ENCODE measurements at regions of chr2 and their contacts with region 1.

Region 1: DNA sequence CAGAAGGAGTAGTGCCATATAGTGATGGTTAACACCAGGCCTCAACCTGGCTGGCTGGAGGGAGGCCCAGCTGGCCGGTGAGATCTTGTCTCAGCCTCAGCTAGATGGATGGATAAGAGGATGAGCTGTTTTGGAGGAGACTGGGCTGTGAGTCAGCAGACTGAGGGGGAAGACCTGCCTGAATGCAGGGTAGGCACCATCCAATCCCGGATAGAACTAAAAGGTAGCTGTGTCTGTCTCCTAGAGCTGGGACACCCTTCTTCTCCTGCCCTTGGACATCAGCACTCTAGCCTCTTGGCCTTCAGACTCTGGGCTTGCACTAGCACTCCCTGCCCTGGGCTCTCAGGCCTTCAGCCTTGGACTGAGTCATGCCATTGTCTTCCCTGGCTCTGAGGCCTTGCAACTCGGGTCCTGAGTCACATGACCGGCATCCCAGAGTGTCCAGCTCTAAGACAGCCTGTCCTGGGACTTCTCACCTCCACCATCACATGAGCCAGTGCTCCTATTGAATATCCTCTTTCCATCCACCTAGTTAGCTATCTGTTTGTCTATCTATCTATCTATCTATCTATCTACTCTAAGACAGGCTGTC is 131.3 kb downstream of the TPO start:
- DNase-seq: no peak
- ATAC-seq: no peak
- H3K4me3 ChIP-seq: no peak overlapping the region
- H3K4me3 Mint-ChIP-seq: no peak overlapping the region
- H3K27ac ChIP-seq: no peak overlapping the region
- H3K27ac Mint-ChIP-seq: no peak overlapping the region
- H3K4me1 ChIP-seq: peaks cover 11% of the 10 kb centered on the region
- H3K4me1 Mint-ChIP-seq: peaks cover 8% of the 10 kb centered on the region
- H3K27me3 ChIP-seq: no peaks in the 10 kb centered on the region
- H3K27me3 Mint-ChIP-seq: peaks cover 3% of the 10 kb centered on the region
- CTCF ChIP-seq: no peak

Region 2: DNA sequence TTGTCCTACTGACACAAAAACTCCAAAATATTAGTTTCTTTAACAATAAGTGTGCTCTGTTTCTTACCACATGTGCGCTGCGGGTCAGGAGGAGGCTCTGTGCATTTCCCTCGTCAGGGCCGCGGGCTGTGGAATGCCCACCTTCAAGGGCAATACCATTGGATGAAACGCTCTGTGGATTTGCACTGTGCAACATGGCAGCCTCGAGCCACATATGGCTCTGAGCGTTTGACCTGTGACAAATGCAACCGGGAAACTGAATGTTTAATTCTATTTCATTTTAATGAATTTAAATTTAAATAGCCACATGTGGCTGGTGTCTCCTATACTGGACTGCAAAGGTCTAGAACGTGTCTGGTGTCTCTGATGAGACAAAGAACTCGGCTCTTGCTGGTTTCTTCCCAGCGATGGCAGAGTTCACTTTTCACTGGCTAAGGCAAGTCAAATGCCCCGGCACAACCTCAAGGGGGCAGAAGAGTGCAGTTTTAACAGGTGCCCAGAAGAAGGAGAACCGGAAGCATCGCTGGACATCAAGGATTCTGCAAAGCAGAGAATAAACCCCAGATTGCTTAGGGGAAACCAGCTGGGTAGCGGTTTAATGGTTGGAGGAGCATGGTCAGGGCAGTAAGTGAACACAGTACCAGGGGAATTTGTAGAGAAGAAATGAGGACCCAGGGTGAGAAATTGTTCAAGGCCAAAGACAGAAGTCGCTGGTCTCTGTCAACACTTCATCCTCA is 830.4 kb before region 1 on chr2:
- CTCF ChIA-PET with region 1: no interaction called
- POLR2A ChIA-PET with region 1: no interaction called
- intact Hi-C with region 1: loop called in 1 of 2 experiments (anchors 2 kb)
- DNase-seq: peak in 5 of 14 experiments; percentile 4 to 54 (median 23)
- ATAC-seq: no peak
- H3K4me3 ChIP-seq: no peak overlapping the region
- H3K4me3 Mint-ChIP-seq: no peak overlapping the region
- H3K27ac ChIP-seq: no peak overlapping the region
- H3K27ac Mint-ChIP-seq: no peak overlapping the region
- H3K4me1 ChIP-seq: peaks cover 4% of the 10 kb centered on the region
- H3K4me1 Mint-ChIP-seq: no peaks in the 10 kb centered on the region
- H3K27me3 ChIP-seq: peaks cover 0 to 29% of the 10 kb centered on the region in 2 experiments
- H3K27me3 Mint-ChIP-seq: peaks cover 54% of the 10 kb centered on the region
- CTCF ChIP-seq: no peak

Measured in CD4-positive, alpha-beta T cell (primary cell).